ENCODE measurements at regions of chr7 and their contacts with region 1.

Region 1: DNA sequence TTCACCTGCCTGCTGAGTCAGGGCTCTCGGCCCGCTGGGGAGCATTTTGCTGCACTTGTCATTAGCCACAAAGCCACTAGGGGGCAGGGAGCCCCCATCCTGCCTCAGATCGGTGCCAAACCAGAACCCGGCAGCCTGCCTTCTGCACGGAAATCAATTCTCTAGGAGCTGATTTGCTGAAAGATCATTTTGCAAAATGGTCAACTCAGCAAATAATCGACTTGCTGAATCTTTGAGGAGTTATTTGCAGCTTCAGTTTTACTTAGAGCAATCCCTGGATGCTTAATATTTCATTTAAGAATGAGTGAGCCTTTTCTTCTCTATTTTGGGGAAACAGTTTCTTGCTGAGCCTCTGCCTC is 1.7 kb upstream of the GIMAP8 start:
- DNase-seq: peak; percentile 87 to 95 (median 94)
- ATAC-seq: peak; percentile 97
- H3K4me3 ChIP-seq: no peak overlapping the region
- H3K27ac ChIP-seq: no peak overlapping the region
- H3K4me1 ChIP-seq: peaks cover 0 to 4% of the 10 kb centered on the region in 2 experiments; a peak in 3 of 5 replicates
- H3K27me3 ChIP-seq: peaks cover 50 to 80% of the 10 kb centered on the region in 2 experiments
- CTCF ChIP-seq: peak; percentile 96 to 100 (median 98)
- EP300 ChIP-seq: no peak
- POLR2A ChIP-seq: no peak
- RAD21 ChIP-seq: peak; percentile 96 to 98

Region 2: GRCh38 chr7:149764481-149765398 is 684.0 kb before region 1 on chr7:
- CTCF ChIA-PET with region 1: no interaction called
- POLR2A ChIA-PET with region 1: no interaction called
- in situ Hi-C with region 1: no loop called
- intact Hi-C with region 1: no loop called
- DNase-seq: no peak
- ATAC-seq: no peak
- H3K4me3 ChIP-seq: no peak overlapping the region
- H3K27ac ChIP-seq: no peak overlapping the region
- H3K4me1 ChIP-seq: peaks cover 25 to 39% of the 10 kb centered on the region in 2 experiments
- H3K27me3 ChIP-seq: no peaks in the 10 kb centered on the region
- CTCF ChIP-seq: no peak
- EP300 ChIP-seq: no peak
- POLR2A ChIP-seq: no peak
- RAD21 ChIP-seq: no peak

Region 3: GRCh38 chr7:150432915-150433892 is 15.6 kb before region 1 on chr7:
- CTCF ChIA-PET with region 1: no interaction called
- POLR2A ChIA-PET with region 1: interaction called, 29 read pairs
- in situ Hi-C with region 1: no loop called
- intact Hi-C with region 1: no loop called
- DNase-seq: peak in 3 of 4 experiments; percentile 18 to 60 (median 60)
- ATAC-seq: peak; percentile 72
- H3K4me3 ChIP-seq: no peak overlapping the region
- H3K27ac ChIP-seq: peak overlapping the region; percentile 38; the same call in 1 of the 3 replicates
- H3K4me1 ChIP-seq: peaks cover 15 to 32% of the 10 kb centered on the region in 2 experiments
- H3K27me3 ChIP-seq: no peaks in the 10 kb centered on the region
- CTCF ChIP-seq: no peak
- EP300 ChIP-seq: no peak
- POLR2A ChIP-seq: no peak
- RAD21 ChIP-seq: no peak

Region 4: DNA sequence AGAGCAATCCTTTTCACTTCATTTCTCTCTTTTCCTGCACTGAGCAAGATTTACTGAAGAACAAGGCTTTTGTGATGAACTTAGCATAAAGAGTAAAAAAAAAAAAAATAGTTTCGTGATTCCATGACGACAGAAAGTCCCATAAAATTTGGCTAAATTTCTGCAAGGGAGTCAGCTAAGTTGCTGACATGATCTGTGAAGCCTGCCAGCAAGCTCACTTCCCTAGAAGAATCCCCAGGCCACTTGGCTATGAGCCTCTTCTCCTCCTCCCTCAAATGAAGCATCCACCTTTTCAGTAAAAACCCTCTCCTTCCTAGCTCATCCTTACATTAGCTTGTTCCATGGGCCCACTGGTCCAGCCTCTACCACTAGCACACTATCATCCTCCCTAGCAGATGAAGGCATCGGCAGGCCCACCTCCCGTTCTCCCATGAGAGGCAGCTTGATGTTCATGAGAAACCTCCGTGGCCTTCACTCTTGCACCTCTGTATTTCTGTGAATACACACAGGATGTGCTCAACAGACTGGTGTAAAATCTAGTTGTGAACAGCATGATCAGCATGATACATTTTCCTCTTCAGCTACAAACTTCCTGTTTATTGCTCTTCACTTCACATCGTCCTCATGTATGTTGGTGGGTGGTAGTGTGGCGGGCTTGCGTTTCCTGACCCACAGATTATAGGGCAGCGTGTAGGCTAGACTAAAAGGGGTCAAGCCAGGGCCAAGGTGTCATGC is 32.6 kb after region 1 on chr7:
- CTCF ChIA-PET with region 1: interaction called, 3 read pairs
- POLR2A ChIA-PET with region 1: interaction called, 3 read pairs
- in situ Hi-C with region 1: no loop called
- intact Hi-C with region 1: loop called (anchors 5 kb)
- DNase-seq: no peak
- ATAC-seq: no peak
- H3K4me3 ChIP-seq: no peak overlapping the region
- H3K27ac ChIP-seq: no peak overlapping the region
- H3K4me1 ChIP-seq: no peaks in the 10 kb centered on the region; a peak in 1 of 5 replicates
- H3K27me3 ChIP-seq: peaks cover 29 to 38% of the 10 kb centered on the region in 2 experiments
- CTCF ChIP-seq: no peak
- EP300 ChIP-seq: no peak
- POLR2A ChIP-seq: no peak
- RAD21 ChIP-seq: no peak

Region 5: DNA sequence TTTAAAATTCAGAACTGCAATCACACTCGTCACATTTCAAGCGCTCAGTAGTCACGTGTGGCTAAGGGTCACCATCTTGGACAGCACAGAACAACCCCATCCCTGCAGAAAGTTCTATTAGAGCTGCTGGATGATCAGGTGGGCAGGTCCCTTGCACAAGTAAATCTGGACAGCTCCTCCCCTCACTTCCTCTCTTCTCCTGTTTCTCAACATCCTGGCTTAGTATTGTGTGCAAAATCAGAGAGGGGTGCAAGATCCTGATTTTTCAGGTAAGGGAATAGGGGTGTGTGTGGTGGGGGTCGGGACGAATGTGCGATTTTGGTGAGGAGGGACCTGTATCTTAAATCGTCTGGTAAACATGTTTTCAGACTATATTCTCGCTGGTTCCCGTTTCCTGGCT is 118.4 kb after region 1 on chr7 and contains the start of gene GIMAP4:
- CTCF ChIA-PET with region 1: no interaction called
- POLR2A ChIA-PET with region 1: no interaction called
- in situ Hi-C with region 1: no loop called
- intact Hi-C with region 1: loop called (anchors 5 kb)
- DNase-seq: no peak
- ATAC-seq: no peak
- H3K4me3 ChIP-seq: no peak within 1 kb of the TSS
- H3K27ac ChIP-seq: no peak within 1 kb of the TSS
- H3K4me1 ChIP-seq: no peaks in the 10 kb centered on the region
- H3K27me3 ChIP-seq: peaks cover 0 to 18% of the 10 kb centered on the region in 2 experiments; a peak in 3 of 5 replicates
- CTCF ChIP-seq: no peak
- EP300 ChIP-seq: no peak
- POLR2A ChIP-seq: no peak
- RAD21 ChIP-seq: no peak
- polyA plus RNA-seq, gene GIMAP4: not detected

Region 6: DNA sequence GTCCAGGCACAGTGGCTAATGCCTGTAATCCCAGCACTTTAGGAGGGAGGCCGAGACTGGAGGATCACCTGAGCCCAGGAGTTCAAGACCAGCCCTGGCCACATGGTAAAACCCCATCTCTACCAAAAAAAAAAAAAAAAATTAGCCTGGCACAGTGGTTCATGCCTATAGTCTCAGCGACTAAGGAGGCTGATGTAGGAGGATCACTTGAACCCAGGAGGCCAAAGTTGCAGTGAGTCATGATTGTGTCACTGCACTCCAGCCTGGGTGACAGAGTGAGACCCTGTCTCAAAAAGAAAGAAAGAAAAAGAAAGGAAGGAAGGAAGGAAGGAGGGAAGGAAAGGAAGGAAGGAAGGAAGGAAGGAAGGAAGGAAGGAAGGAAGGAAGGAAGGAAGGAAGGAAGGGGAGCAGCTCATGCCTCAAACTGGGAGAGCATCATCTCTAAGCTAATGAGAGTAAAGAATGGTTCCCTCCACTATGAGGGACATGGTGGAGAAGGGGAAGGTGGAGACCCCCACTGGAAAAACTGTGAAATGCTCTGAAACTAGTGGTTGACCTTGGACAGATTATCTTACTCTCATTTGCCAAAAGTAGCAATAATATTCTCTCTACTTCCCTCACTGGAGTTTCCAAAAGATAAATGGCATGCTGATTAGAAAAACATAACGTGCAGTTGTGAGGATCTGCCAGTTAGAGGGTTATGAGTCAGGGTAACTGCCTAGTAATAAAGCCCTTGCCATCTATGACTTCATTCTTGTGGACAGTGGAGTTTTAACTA is 305.2 kb after region 1 on chr7:
- CTCF ChIA-PET with region 1: interaction called, 8 read pairs
- POLR2A ChIA-PET with region 1: no interaction called
- in situ Hi-C with region 1: no loop called
- intact Hi-C with region 1: loop called (anchors 1 kb)
- DNase-seq: peak in 3 of 4 experiments; percentile 25 to 56 (median 39)
- ATAC-seq: peak; percentile 92
- H3K4me3 ChIP-seq: no peak overlapping the region
- H3K27ac ChIP-seq: no peak overlapping the region
- H3K4me1 ChIP-seq: no peaks in the 10 kb centered on the region
- H3K27me3 ChIP-seq: peaks cover 5 to 17% of the 10 kb centered on the region in 2 experiments
- CTCF ChIP-seq: peak; percentile 71 to 82 (median 73)
- EP300 ChIP-seq: no peak
- POLR2A ChIP-seq: no peak
- RAD21 ChIP-seq: peak; percentile 73 to 81

Measured in K562 (cell line).